Dendritic cell treated with granulocyte-macrophage colony-stimulating factor and Interleukin-4, amounts not matched to agents 40 ng/mL and 50 ng/mL, for 4 days (primary cell): ENCODE measurements at regions of chr12 and their contacts with region 1.

Region 1: GRCh38 chr12:45543906-45544315 is 185.6 kb upstream of the ARID2 start:
- H3K4me3 Mint-ChIP-seq: no peak overlapping the region
- H3K27ac Mint-ChIP-seq: no peak overlapping the region
- H3K4me1 Mint-ChIP-seq: no peaks in the 10 kb centered on the region
- H3K27me3 Mint-ChIP-seq: peaks cover 1% of the 10 kb centered on the region

Region 2: GRCh38 chr12:45490213-45490873 is 53.6 kb before region 1 on chr12:
- intact Hi-C with region 1: no loop called
- H3K4me3 Mint-ChIP-seq: no peak overlapping the region
- H3K27ac Mint-ChIP-seq: no peak overlapping the region
- H3K4me1 Mint-ChIP-seq: no peaks in the 10 kb centered on the region
- H3K27me3 Mint-ChIP-seq: no peaks in the 10 kb centered on the region

Region 3: GRCh38 chr12:45518291-45519235 is 25.3 kb before region 1 on chr12:
- intact Hi-C with region 1: no loop called
- H3K4me3 Mint-ChIP-seq: no peak overlapping the region
- H3K27ac Mint-ChIP-seq: no peak overlapping the region
- H3K4me1 Mint-ChIP-seq: peaks cover 8% of the 10 kb centered on the region
- H3K27me3 Mint-ChIP-seq: no peaks in the 10 kb centered on the region

Region 4: GRCh38 chr12:45670346-45671065 is 126.6 kb after region 1 on chr12:
- intact Hi-C with region 1: no loop called
- H3K4me3 Mint-ChIP-seq: no peak overlapping the region
- H3K27ac Mint-ChIP-seq: no peak overlapping the region
- H3K4me1 Mint-ChIP-seq: peaks cover 7% of the 10 kb centered on the region
- H3K27me3 Mint-ChIP-seq: no peaks in the 10 kb centered on the region

Region 5: DNA sequence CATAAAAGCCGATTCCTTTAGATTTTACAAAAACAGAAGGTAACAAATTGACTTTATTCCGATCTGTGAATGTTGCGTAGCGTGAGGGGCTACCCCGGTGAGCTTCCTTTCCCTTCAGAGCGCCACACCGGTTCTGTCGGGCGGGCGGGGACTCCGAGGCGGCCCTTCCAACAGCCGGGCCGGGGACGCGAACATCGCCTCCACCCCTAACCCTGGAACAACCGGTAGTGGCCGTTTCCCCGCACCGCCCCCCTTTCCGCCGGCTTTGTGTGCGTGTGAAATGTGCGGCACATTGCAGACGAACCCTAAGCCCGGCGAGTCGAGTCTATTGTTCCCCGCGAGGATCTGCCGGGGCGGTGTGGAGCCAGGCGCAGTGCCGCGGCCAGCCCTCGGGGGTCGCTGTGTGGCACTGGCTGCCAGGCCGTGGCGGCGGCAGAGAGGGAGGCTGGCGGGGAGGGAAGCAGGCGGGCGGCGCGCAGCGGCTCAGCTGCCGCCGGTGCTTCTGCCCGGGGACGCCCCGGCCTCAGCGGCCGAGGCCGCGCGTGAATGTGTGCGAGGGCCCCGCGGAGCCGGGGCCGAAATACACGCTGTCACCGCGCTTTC is 184.8 kb after region 1 on chr12:
- intact Hi-C with region 1: loop called (anchors 5 kb)
- H3K4me3 Mint-ChIP-seq: peak overlapping the region; percentile 96
- H3K27ac Mint-ChIP-seq: peak overlapping the region; percentile 96
- H3K4me1 Mint-ChIP-seq: peaks cover 13% of the 10 kb centered on the region
- H3K27me3 Mint-ChIP-seq: no peaks in the 10 kb centered on the region

Region 6: GRCh38 chr12:45745861-45746277 is 202.0 kb after region 1 on chr12:
- intact Hi-C with region 1: loop called (anchors 1 kb)
- H3K4me3 Mint-ChIP-seq: no peak overlapping the region
- H3K27ac Mint-ChIP-seq: no peak overlapping the region
- H3K4me1 Mint-ChIP-seq: peaks cover 8% of the 10 kb centered on the region
- H3K27me3 Mint-ChIP-seq: no peaks in the 10 kb centered on the region

Region 7: DNA sequence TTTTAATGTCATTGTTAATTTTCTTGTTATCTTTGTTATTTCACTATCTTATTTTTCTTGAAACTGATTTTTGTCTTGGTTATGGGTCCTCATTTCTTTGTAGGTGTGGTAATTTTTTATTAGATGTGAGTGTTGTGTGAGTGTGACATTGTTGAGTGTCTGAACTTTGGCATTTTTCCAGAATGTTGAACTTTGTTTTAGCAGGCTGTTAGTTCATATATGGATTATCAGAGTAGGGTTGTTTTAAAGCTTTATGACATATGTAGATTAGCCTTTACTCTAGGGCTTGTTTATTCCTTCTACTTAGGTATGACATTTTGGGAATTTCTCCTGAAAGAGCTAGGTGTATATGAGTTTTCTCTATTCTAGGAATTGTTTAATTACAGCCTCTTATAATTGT is 289.5 kb after region 1 on chr12:
- intact Hi-C with region 1: no loop called
- H3K4me3 Mint-ChIP-seq: no peak overlapping the region
- H3K27ac Mint-ChIP-seq: no peak overlapping the region
- H3K4me1 Mint-ChIP-seq: peaks cover 1% of the 10 kb centered on the region
- H3K27me3 Mint-ChIP-seq: no peaks in the 10 kb centered on the region